ENCODE measurements at regions of chr6 and their contacts with region 1.

Region 1: DNA sequence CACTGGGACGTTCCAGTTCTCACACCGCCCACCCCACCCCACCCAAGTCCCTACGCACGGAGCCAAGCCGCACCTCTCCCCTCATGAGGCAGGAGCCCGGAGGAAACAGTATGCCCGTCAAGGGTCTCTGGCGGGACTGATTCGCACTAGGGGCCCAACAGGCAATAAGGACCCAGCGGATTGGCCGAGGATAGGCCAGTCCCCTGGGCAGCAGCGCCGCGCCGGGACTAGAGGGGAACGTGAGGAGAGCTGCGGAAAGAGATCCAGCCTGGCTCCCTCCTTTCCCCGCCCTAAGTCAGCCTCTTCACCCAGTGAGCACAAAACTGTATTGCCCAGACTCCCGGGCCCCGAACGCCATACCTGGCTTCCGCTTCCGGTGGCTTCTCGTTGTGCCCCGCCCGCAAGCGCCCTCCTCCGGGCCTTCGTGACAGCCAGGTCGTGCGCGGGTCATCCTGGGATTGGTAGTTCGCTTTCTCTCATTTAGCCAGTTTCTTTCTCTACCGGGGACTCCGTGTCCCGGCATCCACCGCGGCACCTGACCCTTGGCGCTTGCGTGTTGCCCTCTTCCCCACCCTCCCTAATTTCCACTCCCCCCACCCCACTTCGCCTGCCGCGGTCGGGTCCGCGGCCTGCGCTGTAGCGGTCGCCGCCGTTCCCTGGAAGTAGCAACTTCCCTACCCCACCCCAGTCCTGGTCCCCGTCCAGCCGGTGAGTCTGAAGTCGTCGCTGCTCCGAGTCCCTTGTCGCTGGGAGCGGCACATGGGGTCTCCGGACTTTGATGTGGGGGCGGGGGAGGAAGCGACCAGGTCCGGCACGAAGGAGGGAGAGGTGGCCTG is at the start of gene CSNK2B:
- DNase-seq: peak; percentile 91
- H3K4me3 ChIP-seq: peak within 1 kb of the TSS; percentile 98
- H3K27ac ChIP-seq: peak within 1 kb of the TSS; percentile 90
- H3K27me3 ChIP-seq: no peaks in the 10 kb centered on the region
- CTCF ChIP-seq: no peak
- polyA plus RNA-seq, gene CSNK2B: 80.1 and 96.0 TPM in 2 replicates

Region 2: GRCh38 chr6:31847276-31847978 is 181.7 kb after region 1 on chr6:
- CTCF ChIA-PET with region 1: interaction called, 17 read pairs
- POLR2A ChIA-PET with region 1: no interaction called
- DNase-seq: no peak
- H3K4me3 ChIP-seq: no peak overlapping the region
- H3K27ac ChIP-seq: no peak overlapping the region
- H3K27me3 ChIP-seq: no peaks in the 10 kb centered on the region
- CTCF ChIP-seq: no peak

Measured in AG04450 (cell line).